Posterior vena cava (tissue), 2 donors: ENCODE measurements at regions of chr3 and their contacts with region 1.

Region 1: GRCh38 chr3:33074217-33075067 is 22.5 kb downstream of the GLB1 start:
- DNase-seq: no peak

Region 2: GRCh38 chr3:32951410-32951811 is 123.0 kb before region 1 on chr3 and contains the start of gene CCR4:
- intact Hi-C with region 1: loop called in 1 of 2 experiments (anchors 10 kb)
- DNase-seq: peak; percentile 71
- total RNA-seq, gene CCR4: 0.23 to 0.33 TPM

Region 3: DNA sequence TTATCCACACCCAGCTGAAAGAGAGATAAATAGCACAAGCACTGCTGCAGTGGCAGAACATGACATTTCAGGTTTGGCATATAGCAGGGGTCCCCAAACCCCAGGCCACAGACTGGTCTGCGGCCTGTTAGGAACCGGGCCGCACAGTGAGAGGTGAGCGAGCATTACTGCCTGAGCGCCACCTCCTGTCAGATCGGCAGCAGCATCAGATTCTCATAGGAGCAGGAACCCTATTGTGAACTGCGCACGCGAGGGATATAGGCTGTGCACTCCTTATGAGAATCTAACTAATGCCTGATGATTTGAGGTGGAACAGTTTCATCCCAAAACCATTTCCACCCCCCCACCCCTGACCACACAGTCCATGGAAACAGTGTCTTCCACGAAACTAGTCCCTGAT is 68.4 kb before region 1 on chr3:
- intact Hi-C with region 1: loop called in 1 of 2 experiments (anchors 2 kb)
- DNase-seq: no peak